A549 (cell line): ENCODE measurements at regions of chr15 and their contacts with region 1.

Region 1: DNA sequence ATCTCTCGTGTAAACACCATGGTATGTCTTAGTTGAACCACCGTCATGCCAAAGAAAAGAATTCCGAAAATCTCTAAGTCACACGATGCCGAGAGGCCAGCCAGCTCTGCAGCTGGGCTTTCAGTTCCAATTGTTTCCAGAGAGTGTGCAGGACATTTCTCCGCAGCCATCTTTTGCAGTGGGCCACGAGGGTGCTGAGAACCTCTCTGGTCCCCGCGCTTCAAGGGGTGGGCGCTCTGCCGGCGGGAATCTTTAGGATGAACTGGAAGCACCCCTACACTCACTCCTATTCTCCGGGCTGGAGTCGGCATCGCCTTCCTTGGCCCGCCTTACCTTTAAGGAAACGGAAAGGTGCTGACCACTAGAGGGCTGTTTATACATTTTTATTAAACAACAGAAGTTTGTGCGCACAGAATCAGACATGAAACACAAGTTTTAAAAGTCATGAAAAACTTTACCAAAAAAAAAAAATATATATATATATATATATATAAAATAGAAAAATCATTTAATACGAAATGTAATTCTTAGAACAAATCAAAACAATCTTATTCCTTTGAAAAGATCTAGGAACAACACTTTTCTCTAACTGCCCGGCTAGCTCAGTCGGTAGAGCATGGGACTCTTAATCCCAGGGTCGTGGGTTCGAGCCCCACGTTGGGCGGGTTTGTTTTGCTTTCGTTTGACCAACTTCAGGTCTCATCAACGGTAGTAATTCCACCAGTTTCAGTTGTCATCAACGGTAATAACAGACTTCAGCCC is 12.5 kb upstream of the MORF4L1 start:
- DNase-seq: peak; percentile 96
- ATAC-seq: peak; percentile 97 to 98
- H3K4me3 ChIP-seq: peak overlapping the region; percentile 59
- H3K27ac ChIP-seq: peak overlapping the region; percentile 82 to 88
- H3K4me1 ChIP-seq: no peaks in the 10 kb centered on the region
- CTCF ChIP-seq: peak; percentile 91
- EP300 ChIP-seq: no peak
- POLR2A ChIP-seq: peak; percentile 32; the same call in 1 of the 2 replicates
- RAD21 ChIP-seq: peak; percentile 34 to 54; a peak in 4 of 5 replicates

Region 2: DNA sequence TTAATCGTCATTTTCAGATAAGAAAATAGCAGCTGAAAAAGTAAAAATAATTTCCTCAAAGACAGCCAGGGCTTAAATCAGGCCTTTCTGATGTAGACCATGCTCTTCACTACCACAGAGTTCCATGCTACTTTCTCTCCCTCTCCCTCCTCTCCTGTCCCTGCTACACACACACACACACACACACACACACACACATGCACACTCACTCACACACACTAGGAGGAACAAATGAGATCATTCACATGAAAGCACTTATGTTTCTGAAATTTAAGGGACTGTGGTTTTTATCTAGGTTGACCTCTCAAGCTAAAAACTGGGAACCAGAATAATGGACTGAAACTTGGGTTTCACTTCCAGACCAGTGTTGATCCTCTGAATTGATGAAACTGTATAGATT is 324.0 kb before region 1 on chr15:
- CTCF ChIA-PET with region 1: no interaction called
- POLR2A ChIA-PET with region 1: no interaction called
- DNase-seq: no peak
- ATAC-seq: no peak
- H3K4me3 ChIP-seq: no peak overlapping the region
- H3K27ac ChIP-seq: no peak overlapping the region
- H3K4me1 ChIP-seq: 0 out of 3 replicates have a peak, but pooled peaks cover 3% of the 10 kb centered on the region
- CTCF ChIP-seq: no peak
- EP300 ChIP-seq: no peak
- POLR2A ChIP-seq: no peak
- RAD21 ChIP-seq: no peak

Region 3: DNA sequence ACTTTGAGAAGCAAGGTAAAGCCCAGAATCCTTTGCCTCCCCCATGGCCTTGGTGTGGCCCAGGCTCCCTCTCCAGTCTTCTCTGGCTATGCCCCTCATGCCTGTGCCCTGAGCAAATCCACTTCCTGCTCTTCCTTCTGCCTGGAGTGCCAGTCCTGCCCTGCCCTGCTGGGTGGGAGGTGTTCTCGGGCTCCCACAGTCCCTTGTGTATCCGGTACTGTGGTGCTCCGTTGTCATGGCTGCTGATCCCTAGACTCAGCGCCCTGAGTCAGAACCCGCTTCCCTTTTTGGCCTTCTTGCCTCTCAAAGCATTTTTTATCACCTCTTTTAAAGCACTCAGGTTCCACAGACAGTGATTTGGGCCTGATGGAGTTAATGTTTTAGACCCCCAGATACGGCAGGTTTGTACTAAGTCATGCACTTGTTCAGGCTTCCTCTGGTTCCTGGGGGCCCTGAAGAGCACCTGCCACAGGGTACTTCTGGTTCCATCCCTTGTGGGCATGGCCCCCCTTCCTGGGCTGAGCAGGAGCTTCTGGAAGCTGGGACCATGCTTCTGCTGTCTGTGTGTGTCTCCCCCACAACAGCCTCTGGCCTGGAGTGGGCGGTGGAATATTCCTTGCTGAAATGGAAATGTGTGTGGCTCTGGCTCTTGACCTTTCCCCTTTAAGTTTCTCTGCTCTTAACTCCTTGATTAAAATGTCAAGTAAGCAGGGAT is 19.3 kb before region 1 on chr15:
- CTCF ChIA-PET with region 1: interaction called, 11 read pairs
- POLR2A ChIA-PET with region 1: interaction called, 3 read pairs
- DNase-seq: no peak
- ATAC-seq: peak; percentile 22 to 35; a peak in 4 of 6 replicates
- H3K4me3 ChIP-seq: no peak overlapping the region
- H3K27ac ChIP-seq: no peak overlapping the region
- H3K4me1 ChIP-seq: no peaks in the 10 kb centered on the region
- CTCF ChIP-seq: no peak
- EP300 ChIP-seq: no peak
- POLR2A ChIP-seq: no peak
- RAD21 ChIP-seq: no peak

Region 4: GRCh38 chr15:78872972-78873792 is 13.0 kb after region 1 on chr15:
- CTCF ChIA-PET with region 1: interaction called, 25 read pairs
- POLR2A ChIA-PET with region 1: interaction called, 23 read pairs
- DNase-seq: peak; percentile 85 to 97
- ATAC-seq: peak; percentile 89 to 92
- H3K4me3 ChIP-seq: peak overlapping the region; percentile 99
- H3K27ac ChIP-seq: peak overlapping the region; percentile 94 to 100
- H3K4me1 ChIP-seq: peaks cover 38% of the 10 kb centered on the region
- CTCF ChIP-seq: peak; percentile 68
- EP300 ChIP-seq: no peak
- POLR2A ChIP-seq: peak; percentile 17
- RAD21 ChIP-seq: peak in 1 of 2 experiments; percentile 15; a peak in 2 of 5 replicates

Region 5: GRCh38 chr15:78930556-78931401 is 70.6 kb after region 1 on chr15:
- CTCF ChIA-PET with region 1: no interaction called
- POLR2A ChIA-PET with region 1: no interaction called
- DNase-seq: peak; percentile 68 to 82
- ATAC-seq: peak; percentile 57 to 73
- H3K4me3 ChIP-seq: no peak overlapping the region
- H3K27ac ChIP-seq: peak overlapping the region; percentile 58 to 84; a peak in 5 of 6 replicates
- H3K4me1 ChIP-seq: peaks cover 17% of the 10 kb centered on the region
- CTCF ChIP-seq: no peak
- EP300 ChIP-seq: no peak
- POLR2A ChIP-seq: no peak
- RAD21 ChIP-seq: no peak